ENCODE measurements at regions of chr10 and their contacts with region 1.

Region 1: GRCh38 chr10:7687228-7687907 is 15.7 kb upstream of the ITIH2 start:
- DNase-seq: peak; percentile 86
- H3K4me3 Mint-ChIP-seq: no peak overlapping the region
- H3K27ac Mint-ChIP-seq: no peak overlapping the region
- H3K4me1 Mint-ChIP-seq: peaks cover 15% of the 10 kb centered on the region
- H3K27me3 Mint-ChIP-seq: peaks cover 15% of the 10 kb centered on the region

Region 2: DNA sequence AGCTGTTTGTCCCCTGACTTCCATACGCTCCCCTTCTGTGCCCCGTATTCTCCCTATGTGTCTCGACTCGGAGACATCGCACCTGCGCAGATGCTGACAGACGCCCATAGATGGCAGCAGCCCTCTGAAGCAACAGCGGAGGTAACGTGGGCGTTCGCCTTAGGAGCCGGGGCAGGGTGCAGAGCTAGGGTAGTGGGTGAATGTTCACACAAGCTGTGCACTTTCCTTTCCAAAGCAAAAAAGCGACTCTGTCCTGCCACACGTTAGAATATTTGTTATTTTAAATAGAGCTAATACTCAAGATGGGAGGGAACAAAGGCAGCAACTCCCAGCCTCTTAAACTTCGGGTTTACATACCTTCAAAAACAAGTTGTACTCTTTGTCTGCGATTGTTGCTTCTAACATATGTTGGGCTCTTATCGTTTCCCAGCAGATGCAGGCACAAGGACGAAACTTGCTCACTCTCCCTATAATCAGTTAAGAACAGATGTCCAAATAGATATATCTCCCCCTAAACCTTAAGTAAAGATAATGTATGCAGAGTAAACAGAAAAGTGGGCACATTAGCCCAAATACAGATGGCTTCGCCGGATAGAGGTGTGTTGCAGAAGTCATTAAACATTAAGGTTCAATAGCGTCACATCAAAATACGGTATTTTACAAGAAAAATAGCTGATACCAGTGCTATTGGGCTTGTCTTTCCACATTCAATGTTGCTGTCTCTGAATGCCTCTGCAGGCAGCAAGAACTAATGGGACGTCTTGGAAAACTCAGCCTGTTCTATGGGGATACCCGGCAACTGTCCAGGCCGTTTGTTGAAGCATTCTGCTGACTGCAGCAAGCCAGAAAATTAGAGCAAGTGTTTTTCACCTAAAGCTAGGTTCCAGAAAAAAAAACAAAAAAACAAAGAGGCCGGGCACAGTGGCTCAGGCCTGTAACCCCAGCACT is 767.0 kb before region 1 on chr10:
- CTCF ChIA-PET with region 1: no interaction called
- POLR2A ChIA-PET with region 1: no interaction called
- intact Hi-C with region 1: loop called (anchors 10 kb)
- DNase-seq: peak; percentile 87
- H3K4me3 Mint-ChIP-seq: no peak overlapping the region
- H3K27ac Mint-ChIP-seq: no peak overlapping the region
- H3K4me1 Mint-ChIP-seq: peaks cover 10% of the 10 kb centered on the region
- H3K27me3 Mint-ChIP-seq: no peaks in the 10 kb centered on the region

Region 3: GRCh38 chr10:7525314-7526016 is 161.9 kb before region 1 on chr10:
- CTCF ChIA-PET with region 1: interaction called, 150 read pairs
- POLR2A ChIA-PET with region 1: interaction called, 3 read pairs
- intact Hi-C with region 1: loop called (anchors 1 kb)
- DNase-seq: peak; percentile 63
- H3K4me3 Mint-ChIP-seq: no peak overlapping the region
- H3K27ac Mint-ChIP-seq: peak overlapping the region; percentile 5
- H3K4me1 Mint-ChIP-seq: no peaks in the 10 kb centered on the region
- H3K27me3 Mint-ChIP-seq: no peaks in the 10 kb centered on the region

Region 4: DNA sequence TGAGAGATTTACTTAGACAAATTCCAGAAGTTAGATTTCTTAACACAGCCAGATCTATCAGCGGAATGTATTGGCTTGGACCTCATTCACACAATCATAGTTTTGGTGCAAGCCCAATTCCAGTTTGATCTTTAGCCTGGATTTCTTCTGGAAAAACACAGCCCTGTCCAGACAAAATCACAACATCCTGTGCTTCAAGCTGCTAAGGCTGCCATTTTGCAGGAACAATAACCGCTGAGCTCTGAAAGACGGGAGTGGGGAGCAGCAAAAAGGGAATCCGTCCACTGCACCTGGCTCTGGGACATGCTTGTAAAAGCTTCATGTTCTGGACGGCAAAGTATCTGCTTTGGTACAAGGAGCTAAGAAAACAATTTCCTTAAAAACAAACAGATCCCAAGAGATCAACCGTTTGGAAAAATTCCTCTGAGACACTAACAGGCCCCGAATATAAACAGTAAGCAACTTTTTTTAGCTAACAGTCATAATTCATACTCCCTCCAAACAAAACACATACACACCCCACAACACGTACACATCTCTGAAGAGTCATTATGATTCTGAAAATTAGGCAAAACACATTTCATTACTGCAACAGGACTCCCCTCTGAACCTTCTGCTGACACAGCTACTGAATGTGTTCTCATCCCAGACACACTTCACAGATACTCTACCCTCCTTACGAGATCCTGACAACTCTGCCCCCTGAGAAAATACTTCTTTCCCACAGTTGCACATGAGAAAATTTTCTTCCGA is 53.0 kb before region 1 on chr10:
- CTCF ChIA-PET with region 1: interaction called, 11 read pairs
- POLR2A ChIA-PET with region 1: no interaction called
- intact Hi-C with region 1: no loop called
- DNase-seq: no peak
- H3K4me3 Mint-ChIP-seq: no peak overlapping the region
- H3K27ac Mint-ChIP-seq: no peak overlapping the region
- H3K4me1 Mint-ChIP-seq: no peaks in the 10 kb centered on the region
- H3K27me3 Mint-ChIP-seq: peaks cover 17% of the 10 kb centered on the region

Region 5: GRCh38 chr10:7707102-7707501 is 19.7 kb after region 1 on chr10:
- CTCF ChIA-PET with region 1: interaction called, 14 read pairs
- POLR2A ChIA-PET with region 1: no interaction called
- intact Hi-C with region 1: no loop called
- DNase-seq: no peak
- H3K4me3 Mint-ChIP-seq: no peak overlapping the region
- H3K27ac Mint-ChIP-seq: no peak overlapping the region
- H3K4me1 Mint-ChIP-seq: no peaks in the 10 kb centered on the region
- H3K27me3 Mint-ChIP-seq: peaks cover 26% of the 10 kb centered on the region

Measured in activated CD4-positive, alpha-beta memory T cell treated with anti-CD3 and anti-CD28 coated beads for 36 hours (primary cell).